ENCODE measurements at regions of chr3 and their contacts with region 1.

Region 1: GRCh38 chr3:187919048-187919447 is 173.8 kb upstream of the BCL6 start:
- DNase-seq: peak; percentile 10 to 84 (median 61)
- ATAC-seq: peak; percentile 85
- H3K4me3 ChIP-seq: peak overlapping the region; percentile 23 to 45
- H3K4me3 Mint-ChIP-seq: peak overlapping the region; percentile 80
- H3K27ac ChIP-seq: peak overlapping the region; percentile 28 to 77
- H3K27ac Mint-ChIP-seq: peak overlapping the region; percentile 89
- H3K4me1 ChIP-seq: peaks cover 21% of the 10 kb centered on the region
- H3K4me1 Mint-ChIP-seq: peaks cover 49% of the 10 kb centered on the region
- H3K27me3 ChIP-seq: no peaks in the 10 kb centered on the region
- H3K27me3 Mint-ChIP-seq: no peaks in the 10 kb centered on the region
- CTCF ChIP-seq: no peak

Region 2: DNA sequence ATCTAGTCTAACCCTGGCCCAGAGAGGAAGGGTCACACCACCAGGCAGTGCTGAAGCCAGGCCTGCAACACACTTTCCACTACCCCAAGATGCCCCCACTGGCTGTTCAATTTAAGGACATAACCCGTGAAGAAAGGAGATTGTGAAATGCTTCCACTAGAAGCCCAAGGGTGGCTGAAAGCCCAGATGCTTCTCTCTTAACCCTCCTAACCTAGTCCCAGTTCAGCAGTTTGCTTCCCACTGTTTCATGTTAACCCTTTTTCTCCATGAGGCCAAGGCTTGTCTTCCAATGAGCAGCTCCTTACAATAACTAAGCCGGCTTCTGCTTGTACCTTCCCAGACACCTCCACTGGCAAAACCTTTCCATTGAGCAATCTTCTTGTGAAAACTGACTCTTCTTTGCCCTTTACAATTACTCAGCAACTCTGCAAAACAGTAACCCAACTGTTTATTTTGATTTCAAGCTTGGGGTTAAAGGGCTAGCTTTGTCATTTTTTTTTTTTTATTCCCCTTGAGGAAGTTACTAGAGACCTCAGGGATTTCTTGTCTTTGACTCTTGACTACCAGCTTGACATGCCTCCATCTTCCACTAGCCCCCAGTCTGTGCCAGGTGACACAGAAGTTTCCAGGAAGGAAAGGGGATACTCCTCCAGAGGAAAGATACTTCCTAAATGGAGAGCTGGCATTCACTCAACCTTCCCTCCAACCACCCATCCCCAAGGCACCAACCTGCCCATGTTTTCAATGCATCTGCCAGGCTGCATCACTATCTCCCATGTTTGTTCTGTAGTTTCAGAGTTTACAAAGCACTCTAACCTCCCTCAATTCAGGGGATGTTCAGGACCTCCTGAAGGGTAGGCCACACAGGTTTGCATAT is 36.3 kb after region 1 on chr3:
- CTCF ChIA-PET with region 1: no interaction called
- POLR2A ChIA-PET with region 1: no interaction called
- intact Hi-C with region 1: loop called (anchors 5 kb)
- DNase-seq: no peak
- ATAC-seq: no peak
- H3K4me3 ChIP-seq: no peak overlapping the region
- H3K4me3 Mint-ChIP-seq: no peak overlapping the region
- H3K27ac ChIP-seq: no peak overlapping the region
- H3K27ac Mint-ChIP-seq: no peak overlapping the region
- H3K4me1 ChIP-seq: peaks cover 14% of the 10 kb centered on the region
- H3K4me1 Mint-ChIP-seq: peaks cover 41% of the 10 kb centered on the region
- H3K27me3 ChIP-seq: no peaks in the 10 kb centered on the region
- H3K27me3 Mint-ChIP-seq: no peaks in the 10 kb centered on the region
- CTCF ChIP-seq: no peak

Region 3: GRCh38 chr3:188185717-188186251 is 266.7 kb after region 1 on chr3:
- CTCF ChIA-PET with region 1: no interaction called
- POLR2A ChIA-PET with region 1: no interaction called
- intact Hi-C with region 1: no loop called
- DNase-seq: peak in 1 of 9 experiments; percentile 18
- ATAC-seq: no peak
- H3K4me3 ChIP-seq: no peak overlapping the region
- H3K4me3 Mint-ChIP-seq: no peak overlapping the region
- H3K27ac ChIP-seq: no peak overlapping the region
- H3K27ac Mint-ChIP-seq: peak overlapping the region; percentile 23
- H3K4me1 ChIP-seq: peaks cover 13% of the 10 kb centered on the region
- H3K4me1 Mint-ChIP-seq: peaks cover 50% of the 10 kb centered on the region
- H3K27me3 ChIP-seq: no peaks in the 10 kb centered on the region
- H3K27me3 Mint-ChIP-seq: no peaks in the 10 kb centered on the region
- CTCF ChIP-seq: no peak

Region 4: DNA sequence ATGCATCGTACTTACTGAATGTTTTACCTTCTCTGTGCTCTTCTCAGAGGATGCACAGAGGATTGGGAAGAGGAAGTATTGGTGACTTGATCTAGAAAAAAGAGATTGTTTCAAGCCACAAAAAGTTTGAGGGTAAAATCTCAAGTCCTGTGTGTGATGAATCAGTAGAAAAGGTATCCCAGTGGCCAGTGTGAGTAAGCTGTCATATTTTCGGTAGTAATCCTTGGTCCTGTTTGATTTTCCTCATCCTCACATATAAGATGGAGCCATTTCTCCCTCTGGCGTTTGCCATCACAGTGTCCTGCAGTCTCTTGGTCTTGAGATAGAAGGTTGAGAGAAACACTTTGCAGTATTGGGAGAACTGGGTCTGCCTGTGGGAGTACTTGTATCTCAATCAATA is 401.7 kb after region 1 on chr3:
- CTCF ChIA-PET with region 1: no interaction called
- POLR2A ChIA-PET with region 1: no interaction called
- intact Hi-C with region 1: no loop called
- DNase-seq: no peak
- ATAC-seq: no peak
- H3K4me3 ChIP-seq: no peak overlapping the region
- H3K4me3 Mint-ChIP-seq: no peak overlapping the region
- H3K27ac ChIP-seq: no peak overlapping the region
- H3K27ac Mint-ChIP-seq: no peak overlapping the region
- H3K4me1 ChIP-seq: peaks cover 21% of the 10 kb centered on the region
- H3K4me1 Mint-ChIP-seq: peaks cover 48% of the 10 kb centered on the region
- H3K27me3 ChIP-seq: no peaks in the 10 kb centered on the region
- H3K27me3 Mint-ChIP-seq: no peaks in the 10 kb centered on the region
- CTCF ChIP-seq: no peak

Measured in CD8-positive, alpha-beta T cell (primary cell).